Stomach (tissue), 19 donors: ENCODE measurements at regions of chr14 and their contacts with region 1.

Region 1: GRCh38 chr14:64928239-64929013 is 14.1 kb downstream of the GPX2 start:
- DNase-seq: no peak
- H3K4me3 ChIP-seq: no peak overlapping the region
- H3K27ac ChIP-seq: peak overlapping the region in 1 of 5 donors; percentile 18
- H3K4me1 ChIP-seq: peaks cover 0 to 31% (median 14%) of the 10 kb centered on the region in 4 donors
- H3K27me3 ChIP-seq: no peaks in the 10 kb centered on the region
- CTCF ChIP-seq: no peak
- EP300 ChIP-seq: no peak
- POLR2A ChIP-seq: no peak

Region 2: DNA sequence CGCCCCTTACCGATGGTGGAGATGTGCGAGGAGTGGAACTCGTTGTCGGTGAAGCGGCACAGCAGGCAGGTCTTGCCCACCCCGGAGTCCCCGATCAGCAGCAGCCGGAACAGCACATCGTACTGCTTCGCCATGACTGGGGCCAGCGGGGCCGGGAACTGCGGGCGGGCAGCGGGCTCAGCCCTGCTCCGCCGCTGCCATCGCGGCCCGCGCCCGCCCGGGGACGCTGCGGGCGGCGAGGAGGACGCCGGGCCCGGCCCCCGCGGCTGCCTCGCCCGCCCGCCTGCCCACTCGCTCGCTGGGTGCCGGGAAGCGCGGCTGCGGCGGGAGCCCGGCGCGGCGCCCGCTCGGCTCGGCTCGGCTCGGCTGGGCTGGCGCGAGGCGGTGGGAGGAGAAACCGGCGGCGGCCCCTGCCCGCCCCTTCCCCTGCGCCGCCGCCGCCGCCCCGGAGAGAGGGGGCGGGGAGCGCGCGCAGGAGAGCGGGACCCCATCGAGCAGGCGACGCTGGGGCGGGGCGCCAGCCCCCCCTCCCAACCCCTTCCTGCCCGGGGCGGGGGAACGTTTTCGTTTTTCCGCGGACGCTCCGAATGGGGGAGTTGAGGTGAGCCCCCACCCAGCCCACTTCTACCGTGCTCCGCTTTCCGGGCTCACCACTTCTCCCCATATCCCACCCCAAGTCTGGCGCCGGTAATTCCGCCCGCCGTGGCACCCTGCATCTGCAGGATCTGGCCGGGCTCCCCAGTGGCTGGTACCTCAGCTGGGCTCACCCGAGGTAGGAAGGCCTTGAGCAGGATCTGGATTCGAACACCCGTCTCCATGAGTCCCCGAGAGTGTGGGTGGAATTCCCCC is 43.7 kb after region 1 on chr14 and contains the start of gene RAB15:
- intact Hi-C with region 1: loop called (anchors 10 kb)
- DNase-seq: peak; percentile 48 to 83
- H3K4me3 ChIP-seq: peak within 1 kb of the TSS; percentile 56 to 77 (median 70)
- H3K27ac ChIP-seq: peak within 1 kb of the TSS in 4 of 5 donors; percentile 24 to 73 (median 36)
- H3K4me1 ChIP-seq: peaks cover 11 to 22% (median 20%) of the 10 kb centered on the region in 4 donors
- H3K27me3 ChIP-seq: peaks cover 0 to 12% (median 0%) of the 10 kb centered on the region in 3 donors
- CTCF ChIP-seq: no peak
- EP300 ChIP-seq: no peak
- POLR2A ChIP-seq: no peak
- total RNA-seq, gene RAB15: 1.2 to 20.3 (median 11.0) TPM